ENCODE measurements at regions of chr3 and their contacts with region 1.

Region 1: GRCh38 chr3:5122030-5122740 is at the start of gene ARL8B:
- DNase-seq: peak; percentile 58 to 90
- H3K4me3 ChIP-seq: peak within 1 kb of the TSS; percentile 76
- H3K27ac ChIP-seq: peak within 1 kb of the TSS; percentile 85
- H3K4me1 ChIP-seq: peaks cover 26% of the 10 kb centered on the region
- H3K27me3 ChIP-seq: no peaks in the 10 kb centered on the region
- CTCF ChIP-seq: peak; percentile 72
- total RNA-seq, gene ARL8B: 45.4 and 49.5 TPM in 2 replicates

Region 2: DNA sequence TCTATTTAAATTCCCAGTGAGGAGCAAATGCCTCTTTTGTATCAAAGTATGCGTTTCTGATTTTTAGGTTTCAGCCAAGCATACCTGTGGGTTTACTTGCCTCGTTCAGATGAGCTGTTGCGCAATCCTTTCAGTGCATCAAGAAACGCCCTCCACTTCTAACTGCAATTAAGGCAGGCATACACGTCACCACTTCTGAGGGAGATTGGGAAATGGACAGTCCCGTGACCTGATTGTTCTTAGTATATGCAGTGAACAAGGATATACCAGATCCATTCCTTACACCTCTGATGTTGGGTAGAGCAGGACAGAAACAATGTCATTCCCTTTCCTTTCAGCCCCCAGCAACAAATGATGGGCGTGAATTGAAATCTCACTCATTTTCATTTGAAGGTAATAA is 410.0 kb before region 1 on chr3:
- CTCF ChIA-PET with region 1: interaction called, 3 read pairs
- POLR2A ChIA-PET with region 1: no interaction called
- intact Hi-C with region 1: loop called (anchors 1 kb)
- DNase-seq: peak; percentile 69 to 91
- H3K4me3 ChIP-seq: 0 out of 2 replicates have a peak overlapping the region, but pooled peaks have one; percentile 23
- H3K27ac ChIP-seq: peak overlapping the region; percentile 87
- H3K4me1 ChIP-seq: peaks cover 13% of the 10 kb centered on the region
- H3K27me3 ChIP-seq: no peaks in the 10 kb centered on the region
- CTCF ChIP-seq: no peak

Region 3: DNA sequence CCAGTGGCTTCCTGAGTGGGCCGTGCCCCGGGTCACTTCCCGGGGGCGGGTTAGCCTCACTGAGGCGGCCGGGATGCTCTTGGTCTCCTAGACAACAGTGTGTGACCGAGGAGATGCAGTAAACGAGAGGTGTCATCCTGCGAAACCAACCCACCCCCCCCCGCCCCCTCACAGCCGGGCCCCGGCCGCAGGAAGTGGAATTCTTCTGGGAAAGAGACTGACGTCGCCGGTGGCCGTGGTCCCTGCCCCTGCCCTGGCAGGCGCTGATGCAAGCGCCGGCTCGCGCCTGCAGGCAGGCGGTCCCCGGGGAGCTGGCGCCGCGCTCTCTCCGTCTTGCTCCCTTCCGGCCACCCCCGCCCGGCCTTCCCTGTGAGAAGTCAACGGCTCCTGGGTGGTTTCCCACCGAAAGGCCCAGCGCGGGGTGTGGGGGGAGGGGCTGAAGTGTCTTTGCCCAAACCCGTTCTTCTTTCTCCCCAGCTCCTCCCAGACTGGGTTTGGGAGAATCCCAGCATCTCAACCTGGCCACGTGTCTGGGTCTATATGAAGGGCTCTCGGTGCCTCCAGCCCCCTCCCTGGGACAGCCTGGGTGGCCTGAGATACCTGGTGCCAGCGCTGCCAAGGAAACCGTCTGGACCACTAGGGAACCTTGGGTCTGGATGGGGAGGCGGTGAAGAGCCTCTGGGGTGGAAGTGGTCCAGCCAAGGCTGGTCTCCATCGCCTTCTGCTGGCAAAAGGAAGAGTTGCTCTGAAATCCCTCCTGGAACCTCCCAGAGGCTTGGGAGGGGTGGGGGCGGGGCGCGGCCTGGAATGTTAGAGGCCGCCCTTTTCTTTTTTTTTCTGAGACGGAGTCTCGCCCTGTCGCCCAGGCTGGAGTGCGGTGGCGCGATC is 95.6 kb before region 1 on chr3:
- CTCF ChIA-PET with region 1: interaction called, 4 read pairs
- POLR2A ChIA-PET with region 1: no interaction called
- intact Hi-C with region 1: loop called (anchors 5 kb)
- DNase-seq: peak; percentile 64 to 87
- H3K4me3 ChIP-seq: peak overlapping the region; percentile 48; the same call in 1 of the 2 replicates
- H3K27ac ChIP-seq: peak overlapping the region; percentile 73
- H3K4me1 ChIP-seq: peaks cover 33% of the 10 kb centered on the region
- H3K27me3 ChIP-seq: no peaks in the 10 kb centered on the region
- CTCF ChIP-seq: peak; percentile 61

Region 4: DNA sequence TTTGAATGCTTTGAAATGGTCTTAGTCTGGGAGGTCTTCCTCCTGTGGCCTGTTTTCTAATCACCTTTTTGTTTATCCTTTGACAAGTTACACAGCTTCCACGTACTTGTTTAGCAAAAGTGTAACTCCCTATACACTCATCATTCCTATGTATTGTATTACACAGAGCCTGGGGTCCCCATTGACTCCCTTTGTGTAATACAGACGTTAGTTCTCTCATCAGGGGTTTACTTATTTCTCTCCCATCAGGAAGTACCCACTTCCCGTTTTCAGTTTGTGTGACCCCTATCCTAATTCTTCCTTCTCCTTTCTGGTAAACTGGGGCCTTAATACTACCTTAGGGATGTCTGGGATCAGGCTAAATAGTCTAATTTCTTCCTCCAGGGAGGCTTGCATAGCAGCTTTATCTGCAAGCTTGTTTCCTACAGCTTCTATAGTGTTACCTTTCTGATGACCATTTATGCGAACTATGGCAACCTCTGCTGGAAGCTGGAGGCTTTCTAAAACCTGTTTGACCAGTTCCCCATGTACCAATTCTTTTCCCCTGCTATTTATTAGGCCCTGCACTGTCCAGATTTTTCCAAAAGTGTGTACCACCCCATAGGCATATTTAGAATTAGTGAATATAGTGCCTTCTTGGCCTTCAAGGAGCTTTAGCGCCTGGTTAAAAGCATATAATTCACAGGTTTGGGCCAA is 22.3 kb after region 1 on chr3:
- CTCF ChIA-PET with region 1: interaction called, 8 read pairs
- POLR2A ChIA-PET with region 1: no interaction called
- intact Hi-C with region 1: loop called (anchors 1 kb)
- DNase-seq: peak; percentile 45 to 79
- H3K4me3 ChIP-seq: no peak overlapping the region
- H3K27ac ChIP-seq: peak overlapping the region; percentile 47
- H3K4me1 ChIP-seq: peaks cover 22% of the 10 kb centered on the region
- H3K27me3 ChIP-seq: no peaks in the 10 kb centered on the region
- CTCF ChIP-seq: no peak

Region 5: GRCh38 chr3:5162102-5162501 is 39.9 kb after region 1 on chr3:
- CTCF ChIA-PET with region 1: no interaction called
- POLR2A ChIA-PET with region 1: no interaction called
- intact Hi-C with region 1: loop called (anchors 5 kb)
- DNase-seq: peak; percentile 38 to 67
- H3K4me3 ChIP-seq: no peak overlapping the region
- H3K27ac ChIP-seq: no peak overlapping the region
- H3K4me1 ChIP-seq: peaks cover 30% of the 10 kb centered on the region
- H3K27me3 ChIP-seq: no peaks in the 10 kb centered on the region
- CTCF ChIP-seq: no peak

Region 6: DNA sequence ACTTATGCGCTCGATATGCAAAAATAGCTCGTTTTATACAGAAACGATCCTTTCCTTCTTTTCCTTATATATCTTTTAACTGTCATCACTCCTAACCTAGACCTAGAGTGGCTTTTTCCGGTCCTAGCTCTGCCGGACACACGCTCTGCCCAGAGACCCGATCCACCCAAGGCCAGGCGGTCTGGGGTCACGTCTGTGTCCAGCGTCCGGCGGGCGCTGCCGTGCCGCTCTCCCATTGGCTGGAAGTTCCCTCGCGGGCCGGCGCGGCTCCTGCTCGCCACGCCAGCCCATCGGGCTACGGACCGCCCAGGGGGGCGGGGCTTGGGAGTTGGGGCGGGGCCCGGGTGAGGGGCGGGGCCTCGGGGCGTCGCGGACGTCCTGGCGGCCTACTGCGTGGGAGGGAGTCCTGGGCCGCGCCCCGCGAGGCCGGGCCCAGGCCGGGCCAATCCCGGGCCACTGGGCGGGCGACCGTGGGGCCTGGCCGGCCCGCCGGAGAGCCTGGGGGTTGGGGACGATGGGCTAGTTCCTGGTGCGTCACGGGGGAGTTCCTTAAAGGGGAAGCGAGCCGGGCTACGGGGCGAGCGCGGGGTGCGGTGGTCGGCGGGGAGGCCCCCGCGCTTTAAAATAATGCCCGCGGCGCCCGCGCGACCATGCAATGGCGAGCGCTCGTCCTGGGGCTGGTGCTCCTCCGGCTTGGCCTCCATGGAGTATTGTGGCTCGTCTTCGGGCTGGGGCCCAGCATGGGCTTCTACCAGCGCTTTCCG is 65.2 kb after region 1 on chr3 and contains the start of gene EDEM1:
- CTCF ChIA-PET with region 1: no interaction called
- POLR2A ChIA-PET with region 1: interaction called, 3 read pairs
- intact Hi-C with region 1: loop called (anchors 2 kb)
- DNase-seq: peak; percentile 73 to 98
- H3K4me3 ChIP-seq: peak within 1 kb of the TSS; percentile 78
- H3K27ac ChIP-seq: peak within 1 kb of the TSS; percentile 73
- H3K4me1 ChIP-seq: peaks cover 22% of the 10 kb centered on the region
- H3K27me3 ChIP-seq: no peaks in the 10 kb centered on the region
- CTCF ChIP-seq: no peak
- total RNA-seq, gene EDEM1: 53.5 and 55.9 TPM in 2 replicates

Region 7: DNA sequence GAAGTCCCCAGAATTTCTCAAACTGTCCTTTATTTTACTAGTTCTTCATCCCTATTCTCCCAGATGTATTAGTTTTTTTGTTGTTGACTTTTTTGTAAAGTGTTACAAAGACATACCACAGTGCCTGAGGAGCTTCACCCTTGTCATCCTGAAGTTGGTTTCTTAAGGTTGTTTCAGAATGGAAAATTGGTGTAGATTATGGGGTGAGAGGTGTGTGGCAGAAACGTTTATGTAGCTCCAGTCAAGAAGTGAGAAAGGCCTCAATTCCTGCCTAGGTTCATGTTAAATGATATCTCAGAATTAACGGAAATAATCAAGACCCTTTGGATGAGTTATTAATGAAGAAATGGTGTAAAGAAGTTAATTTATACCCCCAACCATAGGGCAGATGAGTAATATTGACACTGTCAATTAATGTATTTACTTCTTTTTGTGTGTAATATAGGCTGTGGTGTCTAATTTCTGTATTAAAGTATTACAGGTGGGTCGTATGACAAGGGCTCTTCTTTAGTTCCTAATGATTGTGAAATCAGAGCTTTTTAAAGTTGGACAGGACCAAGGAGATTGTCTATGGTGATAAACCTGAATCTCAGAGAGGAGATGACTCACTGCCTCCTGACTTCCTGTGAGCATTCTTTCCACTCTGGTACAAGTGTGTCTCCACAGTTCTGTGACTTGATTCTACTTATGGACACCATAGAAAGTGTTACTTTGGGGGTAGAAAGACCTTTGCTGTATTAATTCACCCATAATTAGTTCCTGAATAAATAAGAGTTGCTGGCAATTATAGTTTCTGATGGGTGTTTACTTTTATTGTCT is 72.4 kb after region 1 on chr3:
- CTCF ChIA-PET with region 1: interaction called, 10 read pairs
- POLR2A ChIA-PET with region 1: interaction called, 3 read pairs
- intact Hi-C with region 1: loop called (anchors 2 kb)
- DNase-seq: peak; percentile 31 to 91
- H3K4me3 ChIP-seq: peak overlapping the region; percentile 19; the same call in 1 of the 2 replicates
- H3K27ac ChIP-seq: peak overlapping the region; percentile 100
- H3K4me1 ChIP-seq: peaks cover 88% of the 10 kb centered on the region
- H3K27me3 ChIP-seq: no peaks in the 10 kb centered on the region
- CTCF ChIP-seq: no peak

Region 8: GRCh38 chr3:5735896-5736295 is 613.7 kb after region 1 on chr3:
- CTCF ChIA-PET with region 1: no interaction called
- POLR2A ChIA-PET with region 1: no interaction called
- intact Hi-C with region 1: no loop called
- DNase-seq: no peak
- H3K4me3 ChIP-seq: no peak overlapping the region
- H3K27ac ChIP-seq: no peak overlapping the region
- H3K4me1 ChIP-seq: no peaks in the 10 kb centered on the region
- H3K27me3 ChIP-seq: no peaks in the 10 kb centered on the region
- CTCF ChIP-seq: no peak